ENCODE measurements at regions of chr3 and their contacts with region 1.

Region 1: DNA sequence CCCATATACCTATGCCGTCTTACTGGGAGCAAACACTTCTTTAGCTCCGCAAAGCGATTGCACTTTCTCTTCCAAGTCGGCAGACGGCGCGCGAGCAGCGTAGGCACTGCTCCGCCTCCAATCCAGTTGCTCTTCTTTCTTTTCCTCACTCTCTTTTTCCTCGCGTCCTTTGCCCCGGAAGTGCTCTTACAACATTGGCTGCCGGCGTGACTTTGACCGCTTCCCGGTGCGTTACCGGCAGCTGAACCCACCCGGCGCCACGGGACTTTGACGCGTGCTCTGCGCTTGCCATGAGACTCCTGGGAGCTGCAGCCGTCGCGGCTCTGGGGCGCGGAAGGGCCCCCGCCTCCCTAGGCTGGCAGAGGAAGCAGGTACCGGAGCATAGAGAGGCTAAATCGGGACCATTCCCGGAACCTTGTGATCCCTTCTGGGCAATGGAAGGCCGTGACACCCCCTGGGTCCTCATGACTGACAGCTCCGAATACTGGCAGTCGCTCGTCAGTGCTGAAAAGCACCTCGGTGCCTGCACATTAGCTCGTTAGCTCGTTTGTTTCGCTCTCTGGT is at the start of gene GFM1:
- DNase-seq: peak; percentile 94
- ATAC-seq: peak; percentile 96
- H3K4me3 ChIP-seq: peak within 1 kb of the TSS; percentile 75 to 96 (median 91)
- H3K4me3 Mint-ChIP-seq: peak within 1 kb of the TSS; percentile 99
- H3K27ac ChIP-seq: peak within 1 kb of the TSS; percentile 63 to 85
- H3K27ac Mint-ChIP-seq: peak within 1 kb of the TSS; percentile 78
- H3K4me1 ChIP-seq: peaks cover 4 to 11% of the 10 kb centered on the region in 2 donors
- H3K4me1 Mint-ChIP-seq: peaks cover 22% of the 10 kb centered on the region
- H3K27me3 ChIP-seq: no peaks in the 10 kb centered on the region
- H3K27me3 Mint-ChIP-seq: no peaks in the 10 kb centered on the region
- CTCF ChIP-seq: peak; percentile 84
- total RNA-seq, gene GFM1: 46.0 and 46.8 TPM in 2 replicates

Region 2: GRCh38 chr3:157618075-157618760 is 1026.2 kb before region 1 on chr3:
- CTCF ChIA-PET with region 1: no interaction called
- POLR2A ChIA-PET with region 1: no interaction called
- intact Hi-C with region 1: loop called (anchors 2 kb)
- DNase-seq: peak; percentile 62
- ATAC-seq: peak; percentile 84
- H3K4me3 ChIP-seq: no peak overlapping the region
- H3K4me3 Mint-ChIP-seq: no peak overlapping the region
- H3K27ac ChIP-seq: no peak overlapping the region
- H3K27ac Mint-ChIP-seq: no peak overlapping the region
- H3K4me1 ChIP-seq: no peaks in the 10 kb centered on the region
- H3K4me1 Mint-ChIP-seq: peaks cover 4% of the 10 kb centered on the region
- H3K27me3 ChIP-seq: peaks cover 0 to 4% (median 0%) of the 10 kb centered on the region in 4 experiments
- H3K27me3 Mint-ChIP-seq: peaks cover 31% of the 10 kb centered on the region
- CTCF ChIP-seq: peak; percentile 80

Region 3: DNA sequence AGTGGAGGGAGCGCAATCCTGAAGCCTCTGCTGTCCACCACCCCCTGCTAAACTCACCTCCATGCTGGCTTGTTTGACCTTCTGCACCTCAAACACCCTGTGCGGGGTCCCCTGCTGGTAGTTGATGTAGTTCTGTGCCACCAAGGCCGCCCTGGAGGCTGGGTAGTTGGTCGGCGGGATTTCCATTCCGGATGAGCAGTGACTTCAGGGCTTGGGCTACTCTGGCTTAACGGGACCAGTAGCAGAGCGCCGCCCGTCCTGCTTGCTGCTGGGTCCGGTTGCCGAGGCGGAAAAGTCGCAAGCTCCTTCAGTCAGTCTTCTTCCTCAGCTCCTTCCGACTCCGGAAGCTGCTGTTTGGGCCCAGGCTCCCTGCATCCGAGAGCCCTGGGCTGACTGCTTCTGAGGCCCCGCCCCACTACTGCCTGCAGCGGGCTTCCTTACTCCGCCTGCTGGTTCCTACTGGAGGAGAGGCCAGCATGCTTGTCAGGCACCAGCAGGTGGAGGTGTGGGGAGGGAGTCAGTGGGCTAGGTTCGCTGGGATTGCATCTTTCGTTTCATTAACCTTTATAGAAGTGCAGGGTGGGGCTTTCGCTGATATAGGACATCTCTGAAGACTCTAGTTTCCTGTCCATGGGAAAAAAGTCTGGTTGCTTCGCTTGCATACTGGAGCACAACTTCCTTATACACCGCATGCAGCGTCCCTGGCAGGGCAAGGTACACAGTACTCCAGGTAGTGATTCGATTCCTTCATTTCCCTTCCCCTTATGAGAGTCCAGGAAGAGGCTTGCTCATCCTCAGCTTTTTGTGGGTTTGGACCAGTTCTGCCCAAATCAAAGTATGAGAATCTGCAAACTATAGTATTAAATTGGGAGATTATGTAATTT is 28.1 kb after region 1 on chr3 and contains the start of gene LXN:
- CTCF ChIA-PET with region 1: interaction called, 6 read pairs
- POLR2A ChIA-PET with region 1: no interaction called
- intact Hi-C with region 1: loop called (anchors 2 kb)
- DNase-seq: peak; percentile 78
- ATAC-seq: peak; percentile 97
- H3K4me3 ChIP-seq: peak within 1 kb of the TSS; percentile 58 to 80 (median 76)
- H3K4me3 Mint-ChIP-seq: peak within 1 kb of the TSS; percentile 96
- H3K27ac ChIP-seq: peak within 1 kb of the TSS; percentile 44 to 58
- H3K27ac Mint-ChIP-seq: peak within 1 kb of the TSS; percentile 92
- H3K4me1 ChIP-seq: peaks cover 11 to 12% of the 10 kb centered on the region in 2 donors
- H3K4me1 Mint-ChIP-seq: peaks cover 25% of the 10 kb centered on the region
- H3K27me3 ChIP-seq: no peaks in the 10 kb centered on the region
- H3K27me3 Mint-ChIP-seq: no peaks in the 10 kb centered on the region
- CTCF ChIP-seq: peak; percentile 48
- total RNA-seq, gene LXN: 5.1 and 7.9 TPM in 2 replicates

Region 4: DNA sequence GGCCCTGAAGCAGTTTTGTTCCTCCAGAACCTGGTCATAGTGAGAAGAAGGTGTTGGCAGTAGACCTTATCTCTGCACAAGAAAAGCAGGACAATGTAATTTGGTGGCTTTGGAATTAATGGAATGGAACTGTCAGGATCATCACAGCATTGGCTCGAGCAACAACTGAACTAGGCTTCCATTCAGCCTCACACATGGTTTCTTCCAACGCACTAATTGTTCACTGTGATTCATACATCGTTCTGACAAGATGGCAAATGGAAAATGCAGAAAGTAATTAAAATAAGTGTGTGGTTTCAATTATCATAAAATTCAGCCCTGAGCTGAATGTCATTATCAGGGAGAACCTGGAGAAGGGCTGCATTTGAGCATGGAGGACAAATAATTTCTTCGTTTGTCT is 238.0 kb after region 1 on chr3:
- CTCF ChIA-PET with region 1: no interaction called
- POLR2A ChIA-PET with region 1: no interaction called
- intact Hi-C with region 1: no loop called
- DNase-seq: no peak
- ATAC-seq: no peak
- H3K4me3 ChIP-seq: no peak overlapping the region
- H3K4me3 Mint-ChIP-seq: no peak overlapping the region
- H3K27ac ChIP-seq: no peak overlapping the region
- H3K27ac Mint-ChIP-seq: no peak overlapping the region
- H3K4me1 ChIP-seq: no peaks in the 10 kb centered on the region
- H3K4me1 Mint-ChIP-seq: no peaks in the 10 kb centered on the region
- H3K27me3 ChIP-seq: no peaks in the 10 kb centered on the region
- H3K27me3 Mint-ChIP-seq: peaks cover 8% of the 10 kb centered on the region
- CTCF ChIP-seq: no peak